ENCODE measurements at regions of chr14 and their contacts with region 1.

Region 1: DNA sequence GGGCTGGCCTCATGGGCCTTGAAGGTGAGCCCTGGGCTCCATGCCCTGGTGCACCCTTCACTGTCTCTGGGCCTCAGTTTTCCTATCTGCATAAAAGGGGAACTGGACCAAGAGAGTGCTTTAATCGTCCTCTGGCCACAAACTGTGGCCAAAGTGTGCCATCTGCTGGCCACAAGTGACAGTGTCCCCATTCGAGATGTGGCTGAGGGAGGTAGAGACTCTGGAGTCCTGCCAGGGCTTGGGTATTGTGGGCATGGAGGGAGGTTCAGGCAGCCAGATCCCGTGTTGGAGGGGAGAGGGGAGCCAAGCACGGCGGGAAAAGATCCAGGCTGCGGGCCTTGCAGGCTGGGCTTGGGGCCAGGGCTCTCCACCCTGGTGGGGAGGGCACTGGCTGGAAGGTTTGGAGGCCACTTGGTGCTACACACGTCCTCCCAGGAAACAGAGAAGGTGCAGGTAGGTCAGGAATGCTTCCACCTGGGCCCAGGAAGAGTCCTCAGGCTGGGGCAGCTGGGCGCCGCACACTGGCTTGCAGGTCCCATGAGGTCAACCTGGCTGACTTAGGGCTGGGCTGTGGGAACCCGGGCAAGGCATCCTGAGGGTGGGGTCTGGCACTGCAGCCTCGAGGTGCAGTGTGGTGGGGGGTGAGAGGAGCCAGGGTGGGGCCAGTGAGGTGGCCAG is 7.3 kb upstream of the KIF26A start:
- DNase-seq: peak; percentile 66
- H3K4me3 Mint-ChIP-seq: no peak overlapping the region
- H3K27ac Mint-ChIP-seq: no peak overlapping the region
- H3K4me1 Mint-ChIP-seq: no peaks in the 10 kb centered on the region
- H3K27me3 Mint-ChIP-seq: peaks cover 95% of the 10 kb centered on the region
- CTCF ChIP-seq: peak; percentile 79

Region 2: GRCh38 chr14:104078031-104078455 is 53.1 kb before region 1 on chr14:
- CTCF ChIA-PET with region 1: interaction called, 10 read pairs
- intact Hi-C with region 1: loop called (anchors 1 kb)
- DNase-seq: peak; percentile 89
- H3K4me3 Mint-ChIP-seq: no peak overlapping the region
- H3K27ac Mint-ChIP-seq: no peak overlapping the region
- H3K4me1 Mint-ChIP-seq: no peaks in the 10 kb centered on the region
- H3K27me3 Mint-ChIP-seq: peaks cover 69% of the 10 kb centered on the region
- CTCF ChIP-seq: peak; percentile 98

Region 3: DNA sequence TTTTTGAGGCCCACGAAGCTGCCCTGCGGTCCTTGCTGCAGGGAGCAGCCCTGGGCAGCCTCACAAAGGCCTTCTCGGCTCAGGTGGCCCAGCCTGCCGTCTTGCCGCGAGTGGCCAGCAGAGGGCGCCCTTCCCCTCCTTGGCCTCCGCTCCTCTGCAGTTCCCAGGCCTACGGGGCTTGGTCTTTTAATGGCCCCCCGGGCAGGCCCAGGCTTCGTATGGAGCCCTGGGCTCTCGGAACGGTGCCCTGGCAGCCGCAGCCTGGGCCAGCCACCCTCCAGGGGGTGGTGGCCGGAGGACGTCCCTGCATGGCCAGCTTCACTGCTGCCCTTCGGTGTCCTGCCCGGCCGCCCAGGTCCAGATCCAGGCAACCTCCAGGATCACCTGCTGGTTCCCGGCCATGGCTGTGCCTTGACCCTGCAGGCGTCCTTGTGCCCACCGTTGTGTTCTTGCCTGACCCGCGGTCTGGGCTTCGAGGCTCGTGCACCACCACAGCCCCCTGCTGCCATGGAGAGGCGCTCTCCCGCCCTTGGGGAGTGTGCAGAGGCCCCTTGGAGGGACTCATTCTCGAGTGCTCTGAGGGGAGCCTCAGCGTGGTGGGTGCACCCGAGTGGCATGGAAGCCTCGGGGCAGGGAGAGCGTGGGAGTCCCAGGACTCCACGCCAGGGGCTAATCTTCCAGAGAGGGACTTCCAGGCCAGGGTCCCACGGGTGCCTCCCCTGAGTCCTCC is 36.2 kb before region 1 on chr14:
- CTCF ChIA-PET with region 1: no interaction called
- intact Hi-C with region 1: loop called (anchors 1 kb)
- DNase-seq: peak; percentile 87
- H3K4me3 Mint-ChIP-seq: no peak overlapping the region
- H3K27ac Mint-ChIP-seq: peak overlapping the region; percentile 42
- H3K4me1 Mint-ChIP-seq: peaks cover 8% of the 10 kb centered on the region
- H3K27me3 Mint-ChIP-seq: peaks cover 32% of the 10 kb centered on the region
- CTCF ChIP-seq: peak; percentile 87

Measured in Calu3 (cell line).